Tibial artery (tissue), 4 donors: ENCODE measurements at regions of chr6 and their contacts with region 1.

Region 1: GRCh38 chr6:136306466-136306865 is 16.8 kb upstream of the BCLAF1 start:
- DNase-seq: no peak
- H3K4me3 ChIP-seq: no peak overlapping the region
- H3K27ac ChIP-seq: no peak overlapping the region
- H3K4me1 ChIP-seq: no peaks in the 10 kb centered on the region
- H3K27me3 ChIP-seq: no peaks in the 10 kb centered on the region
- CTCF ChIP-seq: no peak

Region 2: DNA sequence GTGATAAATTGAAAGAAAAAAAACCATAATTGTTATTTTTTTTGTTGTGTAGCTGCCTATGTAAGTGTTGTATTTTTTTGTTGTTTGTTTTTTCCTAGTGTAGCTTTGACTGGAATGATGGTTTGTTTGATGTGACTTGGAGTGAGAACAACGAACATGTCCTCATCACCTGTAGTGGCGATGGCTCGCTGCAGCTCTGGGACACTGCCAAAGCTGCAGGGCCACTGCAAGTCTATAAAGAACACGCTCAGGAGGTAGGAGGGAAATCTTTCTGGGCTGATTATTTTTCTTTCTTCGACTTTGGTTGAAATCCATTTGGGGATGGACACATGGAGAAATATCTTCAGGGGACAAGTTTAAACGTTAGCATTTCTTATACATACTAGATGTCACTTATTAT is 519.8 kb after region 1 on chr6:
- intact Hi-C with region 1: loop called (anchors 5 kb)
- DNase-seq: no peak
- H3K4me3 ChIP-seq: no peak overlapping the region
- H3K27ac ChIP-seq: no peak overlapping the region
- H3K4me1 ChIP-seq: peaks cover 0 to 11% (median 4%) of the 10 kb centered on the region in 4 donors
- H3K27me3 ChIP-seq: no peaks in the 10 kb centered on the region
- CTCF ChIP-seq: no peak